ENCODE measurements at regions of chr2 and their contacts with region 1.

Region 1: GRCh38 chr2:60998628-60999545 is 18.6 kb upstream of the PEX13 start:
- DNase-seq: peak in 1 of 2 experiments; percentile 64
- H3K4me3 ChIP-seq: no peak overlapping the region
- H3K4me1 ChIP-seq: no peaks in the 10 kb centered on the region
- H3K27me3 ChIP-seq: no peaks in the 10 kb centered on the region

Region 2: GRCh38 chr2:60275958-60276357 is 722.9 kb before region 1 on chr2:
- in situ Hi-C with region 1: no loop called
- DNase-seq: no peak
- H3K4me3 ChIP-seq: no peak overlapping the region
- H3K4me1 ChIP-seq: no peaks in the 10 kb centered on the region
- H3K27me3 ChIP-seq: no peaks in the 10 kb centered on the region; the same call in 1 of the 2 replicates

Region 3: DNA sequence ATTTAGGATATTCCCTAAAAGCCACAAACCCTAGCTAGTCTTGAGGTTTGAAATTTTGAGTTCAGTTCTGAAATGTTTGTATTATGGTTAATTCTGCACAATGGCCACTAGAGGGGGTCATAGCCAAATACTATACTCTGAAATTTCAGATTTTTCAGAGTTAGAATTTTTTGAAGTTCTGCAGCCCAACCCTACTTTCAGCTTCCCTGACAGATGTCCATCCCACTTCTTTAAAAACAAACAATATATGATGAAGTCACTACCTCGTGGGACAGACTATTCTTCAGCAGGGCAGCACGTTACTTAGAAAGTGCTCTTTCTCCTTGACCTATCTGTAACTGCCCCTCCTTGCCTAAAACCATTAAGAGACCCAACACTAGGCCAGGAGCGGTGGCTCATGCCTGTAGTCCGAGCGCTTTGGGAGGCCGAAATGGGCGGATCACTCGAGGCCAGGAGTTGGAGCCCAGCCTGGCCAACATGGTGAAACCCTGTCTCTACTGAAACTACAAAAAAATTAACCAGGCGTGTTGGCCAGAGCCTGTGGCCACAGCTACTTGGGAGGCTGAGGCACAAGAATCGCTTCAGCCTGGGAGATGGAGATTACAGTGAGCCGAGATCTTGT is 291.0 kb before region 1 on chr2:
- in situ Hi-C with region 1: loop called (anchors 5 kb)
- DNase-seq: peak; percentile 10 to 58
- H3K4me3 ChIP-seq: no peak overlapping the region
- H3K4me1 ChIP-seq: no peaks in the 10 kb centered on the region
- H3K27me3 ChIP-seq: no peaks in the 10 kb centered on the region

Region 4: GRCh38 chr2:60804414-60804851 is 194.5 kb before region 1 on chr2:
- in situ Hi-C with region 1: loop called (anchors 5 kb)
- DNase-seq: no peak
- H3K4me3 ChIP-seq: no peak overlapping the region
- H3K4me1 ChIP-seq: no peaks in the 10 kb centered on the region; the same call in 1 of the 2 replicates
- H3K27me3 ChIP-seq: no peaks in the 10 kb centered on the region